ENCODE measurements at regions of chr18 and their contacts with region 1.

Region 1: DNA sequence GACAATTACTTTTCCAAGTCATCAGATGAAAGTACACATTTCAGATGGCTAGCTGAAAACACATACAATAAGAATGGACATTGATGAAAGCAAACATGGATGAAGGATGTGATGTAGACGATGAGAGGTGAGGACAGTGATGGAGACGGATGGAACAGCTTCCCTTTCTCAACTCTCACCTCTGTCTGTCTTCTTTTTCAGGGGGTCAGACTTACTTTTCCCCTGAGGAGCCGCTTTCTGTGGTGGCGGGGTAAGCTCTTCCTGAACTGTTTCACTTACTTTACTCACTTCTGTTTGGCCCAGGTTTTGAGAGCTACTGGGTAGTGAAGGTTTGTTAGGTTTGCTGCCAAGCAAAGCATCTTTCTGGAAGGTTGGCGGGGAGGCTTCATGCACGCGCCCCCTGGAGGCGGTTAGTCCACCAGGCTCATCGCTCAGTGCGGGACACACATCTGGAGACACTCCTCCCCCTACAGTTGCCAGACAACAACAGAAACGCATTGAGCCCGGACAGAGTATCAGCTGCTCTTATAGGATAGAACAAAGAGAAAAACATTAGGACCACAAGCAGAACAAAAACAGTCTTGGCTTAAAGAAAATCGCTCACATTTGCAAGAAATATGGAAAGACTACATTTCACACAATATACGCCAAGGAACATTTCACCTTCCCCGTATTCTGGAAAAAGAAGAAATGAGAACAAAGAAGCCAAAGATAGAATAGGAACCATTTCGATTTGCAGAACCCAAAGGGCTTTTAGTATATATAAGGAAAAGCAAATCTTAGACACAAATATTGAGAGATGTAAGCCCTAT is 90.5 kb downstream of the MYOM1 start:
- DNase-seq: peak; percentile 82
- ATAC-seq: peak; percentile 100
- H3K4me3 ChIP-seq: no peak overlapping the region
- H3K27ac ChIP-seq: no peak overlapping the region
- H3K4me1 ChIP-seq: peaks cover 21% of the 10 kb centered on the region
- H3K27me3 ChIP-seq: no peaks in the 10 kb centered on the region
- CTCF ChIP-seq: peak; percentile 94
- EP300 ChIP-seq: no peak
- POLR2A ChIP-seq: no peak
- RAD21 ChIP-seq: peak; percentile 81

Region 2: GRCh38 chr18:2932247-2933181 is 196.7 kb before region 1 on chr18:
- CTCF ChIA-PET with region 1: interaction called, 10 read pairs
- POLR2A ChIA-PET with region 1: no interaction called
- in situ Hi-C with region 1: no loop called
- intact Hi-C with region 1: loop called (anchors 10 kb)
- DNase-seq: peak; percentile 62
- ATAC-seq: peak; percentile 77
- H3K4me3 ChIP-seq: no peak overlapping the region
- H3K27ac ChIP-seq: peak overlapping the region; percentile 24
- H3K4me1 ChIP-seq: peaks cover 17% of the 10 kb centered on the region
- H3K27me3 ChIP-seq: no peaks in the 10 kb centered on the region
- CTCF ChIP-seq: peak; percentile 69
- EP300 ChIP-seq: no peak
- POLR2A ChIP-seq: peak in 1 of 2 experiments; percentile 14; a peak in 1 of 4 replicates
- RAD21 ChIP-seq: peak; percentile 45; the same call in 1 of the 2 replicates

Region 3: GRCh38 chr18:3012964-3013804 is 116.1 kb before region 1 on chr18 and contains the start of gene LPIN2:
- CTCF ChIA-PET with region 1: interaction called, 4 read pairs
- POLR2A ChIA-PET with region 1: no interaction called
- in situ Hi-C with region 1: no loop called
- intact Hi-C with region 1: loop called (anchors 5 kb)
- DNase-seq: peak; percentile 95
- ATAC-seq: peak; percentile 83
- H3K4me3 ChIP-seq: peak within 1 kb of the TSS; percentile 80 to 85 (median 84)
- H3K27ac ChIP-seq: peak within 1 kb of the TSS; percentile 94
- H3K4me1 ChIP-seq: peaks cover 76% of the 10 kb centered on the region
- H3K27me3 ChIP-seq: no peaks in the 10 kb centered on the region; a peak in 1 of 5 replicates
- CTCF ChIP-seq: no peak
- EP300 ChIP-seq: peak in 1 of 2 experiments; percentile 20; a peak in 1 of 4 replicates
- POLR2A ChIP-seq: peak; percentile 55 to 66
- RAD21 ChIP-seq: peak; percentile 72
- total RNA-seq, gene LPIN2: 46.0 and 59.5 TPM in 2 replicates

Region 4: DNA sequence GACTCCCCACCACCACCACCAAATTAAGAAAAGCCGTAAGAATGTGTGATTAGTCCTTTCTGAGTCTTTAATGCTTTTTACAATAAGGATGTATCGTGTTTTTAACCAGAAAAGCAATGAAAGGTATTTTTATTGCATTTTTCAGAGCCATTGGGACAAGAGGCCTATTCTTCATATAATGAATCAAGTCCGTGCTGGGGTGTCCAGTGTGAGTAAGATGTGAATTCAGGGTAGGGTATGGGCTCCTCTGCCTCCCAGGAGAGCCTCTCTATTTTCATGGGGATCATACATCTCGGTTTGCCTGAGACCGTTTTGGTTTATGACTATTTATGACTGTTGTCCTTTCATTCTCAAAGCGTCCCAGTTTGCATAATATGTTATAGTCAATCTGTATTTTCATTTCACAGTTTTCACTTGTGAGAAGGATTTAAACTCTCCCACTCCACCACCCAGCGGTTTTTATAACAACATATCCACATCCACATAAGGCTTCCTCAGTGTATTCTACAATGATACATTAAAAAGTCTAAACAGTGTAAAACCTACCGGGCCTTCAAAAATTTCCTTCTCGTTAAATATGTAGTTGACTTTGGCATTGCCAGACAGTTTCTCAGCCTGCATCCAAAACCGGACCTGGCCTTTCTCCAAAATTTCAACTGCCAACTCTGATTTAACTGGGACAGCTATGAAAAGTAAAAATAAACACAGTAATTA is 35.5 kb before region 1 on chr18:
- CTCF ChIA-PET with region 1: no interaction called
- POLR2A ChIA-PET with region 1: no interaction called
- in situ Hi-C with region 1: no loop called
- intact Hi-C with region 1: no loop called
- DNase-seq: no peak
- ATAC-seq: no peak
- H3K4me3 ChIP-seq: no peak overlapping the region
- H3K27ac ChIP-seq: no peak overlapping the region
- H3K4me1 ChIP-seq: peaks cover 22% of the 10 kb centered on the region
- H3K27me3 ChIP-seq: no peaks in the 10 kb centered on the region; a peak in 1 of 5 replicates
- CTCF ChIP-seq: no peak
- EP300 ChIP-seq: no peak
- POLR2A ChIP-seq: no peak
- RAD21 ChIP-seq: no peak

Region 5: GRCh38 chr18:3177902-3178687 is 48.8 kb after region 1 on chr18:
- CTCF ChIA-PET with region 1: no interaction called
- POLR2A ChIA-PET with region 1: no interaction called
- in situ Hi-C with region 1: no loop called
- intact Hi-C with region 1: no loop called
- DNase-seq: no peak
- ATAC-seq: no peak
- H3K4me3 ChIP-seq: no peak overlapping the region
- H3K27ac ChIP-seq: no peak overlapping the region
- H3K4me1 ChIP-seq: peaks cover 15% of the 10 kb centered on the region
- H3K27me3 ChIP-seq: no peaks in the 10 kb centered on the region; a peak in 1 of 5 replicates
- CTCF ChIP-seq: no peak
- EP300 ChIP-seq: no peak
- POLR2A ChIP-seq: no peak
- RAD21 ChIP-seq: no peak